ENCODE measurements at regions of chr15 and their contacts with region 1.

Region 1: GRCh38 chr15:40893733-40894688 is at the start of gene VPS18:
- DNase-seq: peak; percentile 100
- ATAC-seq: peak; percentile 99
- H3K4me3 Mint-ChIP-seq: peak within 1 kb of the TSS; percentile 88
- H3K27ac Mint-ChIP-seq: peak within 1 kb of the TSS; percentile 86
- H3K4me1 Mint-ChIP-seq: peaks cover 29% of the 10 kb centered on the region
- H3K27me3 Mint-ChIP-seq: no peaks in the 10 kb centered on the region
- total RNA-seq, gene VPS18: 6.2 TPM

Region 2: DNA sequence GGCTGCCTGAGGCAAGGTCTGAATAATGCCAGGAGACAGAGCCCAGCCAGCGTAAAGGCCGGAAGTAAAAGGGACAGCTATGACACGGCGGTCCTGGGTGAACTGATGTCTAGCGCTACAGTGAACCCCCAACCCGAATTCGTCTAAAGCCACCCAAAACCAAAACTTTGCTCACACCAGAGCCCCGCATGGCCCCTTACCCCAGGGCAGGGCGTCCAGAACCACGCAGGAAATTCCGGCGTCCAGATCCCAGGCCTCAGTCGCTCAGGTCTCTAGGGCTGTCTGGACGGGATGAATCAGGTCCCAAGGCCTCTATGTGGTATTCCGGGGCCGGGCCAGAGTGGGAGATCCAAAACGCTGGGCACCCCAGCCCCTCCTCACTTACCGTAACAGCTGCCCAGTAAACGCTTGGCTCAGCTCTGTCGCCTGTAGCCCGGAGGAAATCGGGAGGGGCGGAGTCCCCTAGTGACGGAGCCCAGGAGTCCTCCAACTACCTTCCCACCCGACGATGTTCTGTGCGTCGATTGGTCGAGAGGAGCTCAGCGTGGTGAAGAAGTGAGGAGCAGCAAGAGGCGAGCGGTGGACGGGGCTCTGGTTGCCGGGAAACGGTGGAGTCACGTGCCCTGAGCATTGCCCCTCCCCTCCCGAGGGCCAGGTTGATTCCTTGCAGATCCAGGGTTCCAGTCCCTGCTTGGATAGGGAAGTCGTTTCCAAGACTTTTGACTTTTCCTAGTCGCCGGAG is 329.2 kb before region 1 on chr15 and contains the start of gene CCDC32:
- CTCF ChIA-PET with region 1: no interaction called
- POLR2A ChIA-PET with region 1: interaction called, 3 read pairs
- intact Hi-C with region 1: loop called in 1 of 2 experiments (anchors 1 kb)
- DNase-seq: peak; percentile 97
- ATAC-seq: peak; percentile 97
- H3K4me3 Mint-ChIP-seq: peak within 1 kb of the TSS; percentile 96
- H3K27ac Mint-ChIP-seq: peak within 1 kb of the TSS; percentile 93
- H3K4me1 Mint-ChIP-seq: peaks cover 44% of the 10 kb centered on the region
- H3K27me3 Mint-ChIP-seq: no peaks in the 10 kb centered on the region
- total RNA-seq, gene CCDC32: 14.2 to 24.5 TPM

Region 3: DNA sequence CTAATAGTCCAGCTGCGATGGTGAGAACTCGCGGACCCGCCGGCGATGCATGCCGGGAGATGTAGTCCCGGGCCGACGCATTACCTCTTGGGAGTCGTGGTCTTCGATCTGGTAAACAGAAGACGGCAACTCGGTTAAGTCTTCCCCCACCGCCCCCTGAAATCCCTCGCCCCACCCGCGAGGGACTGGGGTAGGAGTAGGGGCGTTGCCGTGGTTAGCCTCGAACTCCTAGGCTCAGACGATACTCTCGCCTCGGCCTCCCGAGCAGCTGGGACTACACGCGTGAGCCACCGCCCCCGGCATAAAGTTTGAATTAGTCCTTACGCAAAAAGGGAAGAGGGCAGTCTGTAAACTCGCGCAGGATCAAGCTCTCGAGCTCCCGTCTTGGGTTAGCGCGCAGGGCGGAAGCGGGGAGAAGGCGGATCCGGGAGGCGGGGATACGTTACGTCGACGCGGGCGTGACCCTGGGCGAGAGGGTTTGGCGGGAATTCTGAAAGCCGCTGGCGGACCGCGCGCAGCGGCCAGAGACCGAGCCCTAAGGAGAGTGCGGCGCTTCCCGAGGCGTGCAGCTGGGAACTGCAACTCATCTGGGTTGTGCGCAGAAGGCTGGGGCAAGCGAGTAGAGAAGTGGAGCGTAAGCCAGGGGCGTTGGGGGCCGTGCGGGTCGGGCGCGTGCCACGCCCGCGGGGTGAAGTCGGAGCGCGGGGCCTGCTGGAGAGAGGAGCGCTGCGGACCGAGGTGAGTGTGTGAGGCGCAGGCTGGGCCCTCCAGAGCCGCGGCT is 199.1 kb before region 1 on chr15 and contains the start of gene RAD51:
- CTCF ChIA-PET with region 1: interaction called, 8 read pairs
- POLR2A ChIA-PET with region 1: interaction called, 6 read pairs
- intact Hi-C with region 1: loop called in 1 of 2 experiments (anchors 1 kb)
- DNase-seq: peak; percentile 96
- ATAC-seq: peak; percentile 93
- H3K4me3 Mint-ChIP-seq: peak within 1 kb of the TSS; percentile 95
- H3K27ac Mint-ChIP-seq: peak within 1 kb of the TSS; percentile 98
- H3K4me1 Mint-ChIP-seq: peaks cover 20% of the 10 kb centered on the region
- H3K27me3 Mint-ChIP-seq: no peaks in the 10 kb centered on the region
- total RNA-seq, gene RAD51: 73.5 to 75.3 TPM

Region 4: GRCh38 chr15:40807028-40807887 is 86.8 kb before region 1 on chr15 and contains the starts of genes DNAJC17 and ZFYVE19:
- CTCF ChIA-PET with region 1: interaction called, 10 read pairs
- POLR2A ChIA-PET with region 1: no interaction called
- intact Hi-C with region 1: loop called (anchors 1 kb)
- DNase-seq: peak; percentile 97
- ATAC-seq: peak; percentile 98
- H3K4me3 Mint-ChIP-seq: peak within 1 kb of the TSS; percentile 91
- H3K27ac Mint-ChIP-seq: peak within 1 kb of the TSS; percentile 96
- H3K4me1 Mint-ChIP-seq: peaks cover 19% of the 10 kb centered on the region
- H3K27me3 Mint-ChIP-seq: no peaks in the 10 kb centered on the region
- total RNA-seq, gene DNAJC17: 41.5 to 43.6 TPM
- total RNA-seq, gene ZFYVE19: 27.5 to 33.7 TPM

Region 5: GRCh38 chr15:40873625-40874561 is 20.1 kb before region 1 on chr15 and contains the start of gene RHOV:
- CTCF ChIA-PET with region 1: interaction called, 36 read pairs
- POLR2A ChIA-PET with region 1: no interaction called
- intact Hi-C with region 1: loop called in 1 of 2 experiments (anchors 1 kb)
- DNase-seq: peak; percentile 74
- ATAC-seq: peak; percentile 80
- H3K4me3 Mint-ChIP-seq: peak within 1 kb of the TSS; percentile 70
- H3K27ac Mint-ChIP-seq: no peak within 1 kb of the TSS
- H3K4me1 Mint-ChIP-seq: peaks cover 26% of the 10 kb centered on the region
- H3K27me3 Mint-ChIP-seq: peaks cover 3% of the 10 kb centered on the region
- total RNA-seq, gene RHOV: 0.25 to 0.41 TPM

Region 6: GRCh38 chr15:40941528-40942336 is 47.7 kb after region 1 on chr15:
- CTCF ChIA-PET with region 1: interaction called, 16 read pairs
- POLR2A ChIA-PET with region 1: no interaction called
- intact Hi-C with region 1: loop called in 1 of 2 experiments (anchors 1 kb)
- DNase-seq: peak; percentile 81
- ATAC-seq: peak; percentile 82
- H3K4me3 Mint-ChIP-seq: peak overlapping the region; percentile 80
- H3K27ac Mint-ChIP-seq: peak overlapping the region; percentile 92
- H3K4me1 Mint-ChIP-seq: peaks cover 39% of the 10 kb centered on the region
- H3K27me3 Mint-ChIP-seq: no peaks in the 10 kb centered on the region

Region 7: DNA sequence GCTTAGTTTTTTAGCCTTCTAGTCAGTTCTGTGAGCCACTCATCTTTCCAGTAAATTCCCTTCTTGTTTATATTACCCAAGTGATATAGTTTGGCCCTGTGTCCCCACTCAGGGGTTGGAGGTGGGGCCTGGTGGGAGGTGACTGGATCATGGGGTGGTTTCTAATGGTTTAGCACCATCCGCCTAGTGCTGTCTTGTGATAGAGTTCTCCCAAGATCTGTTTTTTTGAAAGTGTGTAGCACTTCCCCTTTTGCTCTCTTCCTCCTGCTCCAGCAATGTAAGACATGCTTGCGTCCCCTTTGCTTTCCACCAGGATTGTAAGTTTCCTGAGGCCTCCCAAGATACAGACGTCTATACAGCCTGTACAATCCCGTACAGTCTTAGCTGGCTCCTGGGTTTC is 275.8 kb after region 1 on chr15:
- CTCF ChIA-PET with region 1: no interaction called
- POLR2A ChIA-PET with region 1: no interaction called
- intact Hi-C with region 1: no loop called
- DNase-seq: no peak
- ATAC-seq: no peak
- H3K4me3 Mint-ChIP-seq: no peak overlapping the region
- H3K27ac Mint-ChIP-seq: no peak overlapping the region
- H3K4me1 Mint-ChIP-seq: no peaks in the 10 kb centered on the region
- H3K27me3 Mint-ChIP-seq: peaks cover 2% of the 10 kb centered on the region

Region 8: DNA sequence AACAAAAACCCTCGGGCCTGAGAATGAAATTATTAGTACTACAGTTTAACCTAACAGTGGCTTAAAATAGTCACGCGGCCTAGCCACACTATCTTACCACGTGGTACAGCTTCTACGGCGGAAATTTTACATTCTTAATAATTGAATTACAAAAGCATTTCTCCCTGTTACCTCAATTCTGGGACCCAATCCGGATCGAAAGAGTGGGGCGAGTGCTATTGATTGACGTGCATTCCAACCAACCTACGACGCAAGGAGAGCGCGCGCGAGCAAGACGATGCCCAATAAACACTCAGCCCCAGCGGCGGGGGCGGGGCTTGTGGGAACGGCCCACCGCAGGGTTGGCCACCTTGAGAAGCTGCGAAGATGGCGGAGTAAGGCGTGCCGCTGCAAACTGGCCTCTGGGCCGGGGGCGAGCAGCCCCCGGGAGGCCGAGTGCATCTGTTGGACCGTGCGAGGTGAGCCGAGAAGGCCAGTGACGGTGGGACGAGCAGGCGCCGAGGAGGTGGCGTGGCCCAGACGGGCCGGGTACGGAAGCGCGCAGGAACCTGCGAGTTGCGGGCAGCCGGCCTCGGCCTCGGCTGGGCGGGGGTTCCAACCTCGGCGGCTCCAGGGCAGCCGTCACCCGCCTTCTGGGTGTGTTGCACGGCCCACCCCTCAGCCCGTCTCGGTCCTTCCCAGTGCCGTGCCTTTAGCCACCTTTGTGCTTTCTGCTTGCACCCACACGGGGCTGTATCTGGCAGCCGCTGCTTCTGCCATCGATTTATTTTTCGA is 389.8 kb after region 1 on chr15:
- CTCF ChIA-PET with region 1: interaction called, 3 read pairs
- POLR2A ChIA-PET with region 1: no interaction called
- intact Hi-C with region 1: loop called in 1 of 2 experiments (anchors 1 kb)
- DNase-seq: peak; percentile 98
- ATAC-seq: peak; percentile 98
- H3K4me3 Mint-ChIP-seq: peak overlapping the region; percentile 90
- H3K27ac Mint-ChIP-seq: peak overlapping the region; percentile 95
- H3K4me1 Mint-ChIP-seq: peaks cover 42% of the 10 kb centered on the region
- H3K27me3 Mint-ChIP-seq: no peaks in the 10 kb centered on the region